SK-N-SH (cell line): ENCODE measurements at regions of chr13 and their contacts with region 1.

Region 1: DNA sequence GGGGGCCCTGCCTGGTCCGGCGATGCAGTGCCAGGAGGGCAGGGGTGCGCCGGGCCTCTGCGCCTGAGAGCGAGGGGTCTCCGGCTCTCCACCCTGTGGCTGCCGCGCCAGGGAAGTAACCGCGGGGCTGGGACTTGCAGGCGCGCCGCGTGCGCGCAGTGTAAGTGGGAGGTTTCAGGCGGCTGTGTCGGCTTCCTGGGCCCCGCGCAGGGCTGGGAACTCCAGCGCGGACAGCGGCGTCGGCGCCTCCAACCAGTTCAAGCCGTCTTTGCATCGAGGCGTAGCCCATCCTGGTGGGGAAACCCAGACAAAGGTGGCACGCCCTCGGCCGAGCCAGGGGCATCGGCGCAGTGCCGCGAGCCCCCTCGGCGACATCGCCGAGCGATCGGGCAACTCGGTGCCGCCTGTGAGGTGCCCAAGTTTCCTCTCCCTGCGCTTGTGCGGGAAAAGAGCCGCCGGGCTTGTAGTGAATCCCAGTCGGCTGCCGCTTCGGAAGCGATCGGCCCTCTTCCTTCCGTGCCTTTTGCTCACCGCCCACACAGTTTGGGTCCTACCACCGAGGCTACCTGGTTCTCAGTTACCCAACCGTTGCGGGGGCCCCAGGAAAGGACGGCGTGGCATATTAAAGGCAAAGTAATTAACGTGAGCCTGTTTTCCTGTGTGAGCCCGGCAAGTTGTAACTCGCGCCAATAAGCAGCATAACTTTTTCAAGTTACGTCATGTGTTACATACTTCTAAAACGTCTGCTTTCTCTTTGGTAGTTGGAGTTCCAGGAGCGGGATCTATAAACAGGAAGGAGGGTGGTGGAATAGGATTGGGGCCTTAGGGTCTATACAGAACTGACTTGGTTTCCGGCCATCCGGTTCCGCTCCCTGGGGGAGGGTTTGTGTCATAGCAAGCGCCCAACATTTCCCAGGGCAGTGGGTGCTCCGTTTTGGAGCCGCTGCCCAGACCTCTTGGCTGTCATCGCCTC is 1.2 kb downstream of the LRCH1 start:
- DNase-seq: peak; percentile 77
- H3K4me3 ChIP-seq: peak overlapping the region; percentile 85 to 97
- H3K27ac ChIP-seq: peak overlapping the region; percentile 88 to 91
- H3K4me1 ChIP-seq: peaks cover 13% of the 10 kb centered on the region in 2 experiments
- H3K27me3 ChIP-seq: no peaks in the 10 kb centered on the region
- CTCF ChIP-seq: peak; percentile 18; the same call in 1 of the 2 replicates
- EP300 ChIP-seq: no peak
- RAD21 ChIP-seq: no peak

Region 2: DNA sequence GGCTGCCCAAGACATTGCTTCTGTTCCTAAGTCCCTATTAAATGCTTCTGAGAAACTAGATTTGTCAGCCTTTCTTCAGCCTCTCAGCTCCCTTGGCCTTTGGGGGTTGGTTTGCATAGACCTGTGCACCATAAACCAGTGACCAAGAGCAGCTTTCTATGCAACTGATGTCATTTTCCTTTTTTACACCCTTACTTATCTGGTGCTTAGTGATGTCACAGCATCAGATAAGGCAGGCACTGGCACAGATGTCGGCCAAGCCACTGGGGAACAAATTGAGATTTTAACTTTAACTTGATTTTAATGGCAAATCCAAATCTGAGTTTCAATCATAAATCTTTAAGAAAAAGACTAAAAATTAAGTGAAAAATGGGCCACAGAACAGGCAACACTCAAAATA is 226.9 kb before region 1 on chr13:
- CTCF ChIA-PET with region 1: no interaction called
- POLR2A ChIA-PET with region 1: no interaction called
- DNase-seq: peak; percentile 29
- H3K4me3 ChIP-seq: no peak overlapping the region
- H3K27ac ChIP-seq: no peak overlapping the region
- H3K4me1 ChIP-seq: peaks cover 0 to 2% of the 10 kb centered on the region in 2 experiments; a peak in 1 of 4 replicates
- H3K27me3 ChIP-seq: no peaks in the 10 kb centered on the region
- CTCF ChIP-seq: no peak
- EP300 ChIP-seq: no peak
- RAD21 ChIP-seq: no peak

Region 3: DNA sequence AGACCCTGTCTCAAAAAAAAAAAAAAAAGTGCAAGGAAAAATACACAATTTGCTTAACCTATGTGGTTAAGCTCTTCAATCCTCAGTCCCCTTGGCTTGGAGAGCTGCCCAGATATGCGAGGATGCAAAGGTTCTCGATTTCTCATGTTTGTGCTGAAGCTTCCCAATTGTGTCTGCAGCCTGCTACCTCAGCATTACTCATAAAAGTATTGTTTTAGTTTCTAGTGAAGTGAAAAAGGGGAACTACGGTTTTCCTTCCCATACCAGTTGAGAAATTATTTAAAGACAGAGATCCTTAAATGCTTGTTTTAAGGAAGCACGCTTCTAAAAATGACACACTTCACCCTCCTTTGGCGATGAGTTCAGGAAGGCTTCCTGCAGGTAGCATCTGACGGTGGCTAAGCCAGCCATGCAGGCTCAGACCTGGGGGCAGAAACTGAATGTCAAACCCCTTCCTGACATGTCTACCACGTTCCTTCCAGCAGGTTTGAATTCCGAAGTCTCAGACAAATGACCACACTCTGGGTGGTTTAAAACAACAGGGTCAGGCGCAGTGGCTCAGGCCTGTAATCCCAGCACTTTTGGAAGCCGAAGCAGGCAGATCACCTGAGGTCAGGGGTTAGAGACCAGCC is 215.0 kb before region 1 on chr13:
- CTCF ChIA-PET with region 1: no interaction called
- POLR2A ChIA-PET with region 1: no interaction called
- DNase-seq: no peak
- H3K4me3 ChIP-seq: no peak overlapping the region
- H3K27ac ChIP-seq: peak overlapping the region in 1 of 2 experiments; percentile 60; a peak in 2 of 4 replicates
- H3K4me1 ChIP-seq: peaks cover 0 to 24% of the 10 kb centered on the region in 2 experiments; a peak in 1 of 4 replicates
- H3K27me3 ChIP-seq: no peaks in the 10 kb centered on the region
- CTCF ChIP-seq: no peak
- EP300 ChIP-seq: 0 out of 4 replicates have a peak, but pooled peaks of 1 of the 2 experiments have one; percentile 36
- RAD21 ChIP-seq: no peak

Region 4: DNA sequence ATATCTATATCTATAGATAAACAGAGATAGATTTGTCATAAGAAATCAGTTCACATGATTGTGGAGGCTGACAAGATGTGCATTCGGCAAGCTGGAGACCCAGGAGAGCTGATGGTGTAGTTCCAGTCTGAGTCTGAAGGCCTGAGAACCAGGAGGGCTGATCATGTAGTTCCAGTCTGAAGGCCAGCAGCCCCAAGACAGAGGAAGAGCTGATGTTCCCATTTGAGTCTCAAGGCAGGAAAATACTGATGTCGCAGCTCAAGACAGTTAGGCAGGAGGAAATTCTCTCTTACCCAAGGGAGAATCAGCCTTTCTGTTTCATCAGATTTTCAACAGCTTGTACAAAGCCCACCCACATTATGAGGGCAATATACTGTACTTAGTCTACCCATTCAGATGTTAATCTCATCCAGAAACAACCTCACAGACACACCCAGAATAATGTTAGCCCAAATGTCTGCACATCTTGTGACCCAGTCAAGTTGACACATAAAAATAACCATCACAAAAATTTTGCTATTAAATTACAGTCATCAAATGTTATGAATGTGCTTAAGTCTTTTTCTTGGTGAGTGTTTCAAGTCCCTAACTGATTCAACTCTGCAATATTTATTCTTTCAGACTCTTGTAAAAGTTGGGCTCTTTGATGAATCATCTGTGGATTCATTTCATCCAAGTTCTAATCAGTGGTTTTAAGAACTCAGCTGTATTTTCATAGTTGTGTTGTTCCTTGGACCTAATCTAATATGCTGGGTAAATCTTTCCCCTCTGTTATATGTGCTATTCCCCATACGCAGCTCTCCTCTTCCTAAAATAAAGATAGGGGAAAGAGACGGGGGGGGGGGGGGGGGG is 23.9 kb before region 1 on chr13:
- CTCF ChIA-PET with region 1: interaction called, 21 read pairs
- POLR2A ChIA-PET with region 1: no interaction called
- DNase-seq: no peak
- H3K4me3 ChIP-seq: no peak overlapping the region
- H3K27ac ChIP-seq: peak overlapping the region in 1 of 2 experiments; percentile 40; a peak in 2 of 4 replicates
- H3K4me1 ChIP-seq: peaks cover 10 to 17% of the 10 kb centered on the region in 2 experiments; a peak in 3 of 4 replicates
- H3K27me3 ChIP-seq: no peaks in the 10 kb centered on the region
- CTCF ChIP-seq: no peak
- EP300 ChIP-seq: no peak
- RAD21 ChIP-seq: no peak

Region 5: GRCh38 chr13:46565808-46566750 is 11.9 kb after region 1 on chr13:
- CTCF ChIA-PET with region 1: interaction called, 13 read pairs
- POLR2A ChIA-PET with region 1: no interaction called
- DNase-seq: no peak
- H3K4me3 ChIP-seq: no peak overlapping the region
- H3K27ac ChIP-seq: no peak overlapping the region
- H3K4me1 ChIP-seq: peaks cover 8 to 10% of the 10 kb centered on the region in 2 experiments; a peak in 3 of 4 replicates
- H3K27me3 ChIP-seq: no peaks in the 10 kb centered on the region
- CTCF ChIP-seq: no peak
- EP300 ChIP-seq: no peak
- RAD21 ChIP-seq: no peak

Region 6: DNA sequence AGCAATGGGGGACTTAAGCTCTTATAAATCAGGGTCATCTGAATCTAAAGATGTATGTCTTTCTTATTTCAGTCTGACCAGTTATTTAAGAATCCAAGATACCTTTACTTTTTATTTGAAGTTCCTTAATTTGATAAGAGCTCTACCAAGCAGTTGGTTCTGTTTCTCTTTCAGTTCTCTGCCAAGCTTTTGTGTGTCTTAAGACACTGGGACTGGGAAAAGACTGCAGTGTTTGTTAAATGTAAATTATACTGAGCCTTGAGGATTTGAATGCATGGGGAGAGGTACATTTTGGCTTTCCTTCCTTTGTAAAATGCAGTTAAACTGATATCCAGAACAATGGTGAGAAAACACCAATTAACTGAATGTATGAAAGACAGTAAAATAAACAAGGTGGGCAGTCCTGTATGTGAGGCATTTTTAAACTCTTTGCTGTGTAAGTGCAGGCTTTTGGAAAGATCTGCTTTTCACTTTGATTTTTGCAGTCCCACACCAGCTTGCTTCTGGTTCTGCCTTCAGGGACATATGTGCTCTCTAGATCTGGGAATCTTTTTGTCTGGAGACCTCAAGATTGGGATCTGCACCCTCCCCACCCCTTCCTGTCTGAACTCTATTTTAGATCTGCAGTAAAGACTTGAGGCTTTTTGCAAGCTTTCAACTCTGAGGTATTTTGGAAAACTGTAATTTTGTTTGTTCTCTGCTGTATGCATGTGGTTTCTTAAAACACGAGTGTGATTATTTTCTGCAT is 76.4 kb after region 1 on chr13:
- CTCF ChIA-PET with region 1: interaction called, 13 read pairs
- POLR2A ChIA-PET with region 1: no interaction called
- DNase-seq: peak; percentile 30
- H3K4me3 ChIP-seq: no peak overlapping the region
- H3K27ac ChIP-seq: peak overlapping the region; percentile 35 to 99; a peak in 3 of 4 replicates
- H3K4me1 ChIP-seq: peaks cover 29 to 36% of the 10 kb centered on the region in 2 experiments; a peak in 3 of 4 replicates
- H3K27me3 ChIP-seq: no peaks in the 10 kb centered on the region
- CTCF ChIP-seq: no peak
- EP300 ChIP-seq: peak in 1 of 2 experiments; percentile 85; a peak in 2 of 4 replicates
- RAD21 ChIP-seq: peak; percentile 18; the same call in 1 of the 2 replicates

Region 7: DNA sequence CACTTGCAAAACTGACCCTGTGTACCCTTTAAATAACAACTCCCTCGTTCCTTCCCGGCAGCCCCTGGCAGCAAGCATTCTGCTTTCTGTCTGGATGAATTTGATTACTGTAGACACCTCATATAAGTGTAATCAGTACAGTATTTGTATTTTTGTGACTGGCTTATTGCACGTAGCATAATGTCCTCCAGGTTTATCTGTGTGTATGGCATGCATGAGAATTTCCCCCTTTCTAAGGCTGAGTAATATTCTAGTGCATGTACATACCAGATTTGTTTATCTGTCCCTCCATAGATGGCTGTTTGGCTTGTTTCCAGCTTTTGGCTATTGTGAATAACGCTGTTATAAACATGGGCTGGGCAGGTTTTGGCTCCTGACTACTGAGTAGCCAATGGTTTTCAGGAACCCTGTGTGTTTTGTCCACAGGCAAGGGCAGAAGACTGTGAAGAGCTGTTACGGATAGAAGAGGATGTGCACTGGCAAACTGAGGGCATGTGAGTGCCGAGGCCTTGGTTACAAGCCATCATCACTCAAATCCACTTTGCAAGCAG is 144.8 kb after region 1 on chr13:
- CTCF ChIA-PET with region 1: interaction called, 16 read pairs
- POLR2A ChIA-PET with region 1: no interaction called
- DNase-seq: peak; percentile 19
- H3K4me3 ChIP-seq: no peak overlapping the region
- H3K27ac ChIP-seq: peak overlapping the region in 1 of 2 experiments; percentile 54; a peak in 2 of 4 replicates
- H3K4me1 ChIP-seq: peaks cover 0 to 18% of the 10 kb centered on the region in 2 experiments; a peak in 2 of 4 replicates
- H3K27me3 ChIP-seq: no peaks in the 10 kb centered on the region
- CTCF ChIP-seq: no peak
- EP300 ChIP-seq: no peak
- RAD21 ChIP-seq: no peak

Region 8: GRCh38 chr13:46721054-46721453 is 166.9 kb after region 1 on chr13:
- CTCF ChIA-PET with region 1: interaction called, 88 read pairs
- POLR2A ChIA-PET with region 1: no interaction called
- DNase-seq: peak; percentile 53
- H3K4me3 ChIP-seq: no peak overlapping the region
- H3K27ac ChIP-seq: peak overlapping the region in 1 of 2 experiments; percentile 19; a peak in 2 of 4 replicates
- H3K4me1 ChIP-seq: peaks cover 4 to 18% of the 10 kb centered on the region in 2 experiments; a peak in 3 of 4 replicates
- H3K27me3 ChIP-seq: no peaks in the 10 kb centered on the region
- CTCF ChIP-seq: peak; percentile 82
- EP300 ChIP-seq: peak in 1 of 2 experiments; percentile 65; a peak in 2 of 4 replicates
- RAD21 ChIP-seq: peak; percentile 90

Region 9: DNA sequence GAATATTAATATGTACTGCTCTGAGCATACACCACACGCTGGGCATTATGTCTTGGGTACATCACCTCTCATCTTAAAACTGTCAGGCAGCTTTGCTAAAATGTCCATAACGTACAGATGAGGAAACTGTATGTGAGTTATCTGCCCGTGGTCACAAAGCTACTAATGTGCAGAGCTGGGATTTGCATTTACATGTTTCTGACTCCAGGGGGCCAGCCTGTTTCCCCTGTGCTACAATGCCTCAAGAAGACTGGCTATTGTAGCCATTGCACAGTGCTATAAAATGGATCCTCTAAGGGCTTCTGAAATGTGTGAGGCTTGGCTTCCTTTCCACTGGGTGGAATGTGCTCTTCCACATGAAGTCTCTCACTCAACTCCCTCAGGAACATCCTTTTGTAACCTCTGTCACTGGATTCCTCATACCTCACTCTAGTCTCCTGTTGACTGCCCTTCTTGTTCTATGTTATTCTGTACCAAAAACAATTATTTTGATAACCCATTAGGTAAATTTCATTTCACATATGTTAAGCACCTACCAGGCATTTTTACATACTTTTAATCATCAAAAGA is 438.3 kb after region 1 on chr13:
- CTCF ChIA-PET with region 1: no interaction called
- POLR2A ChIA-PET with region 1: no interaction called
- DNase-seq: no peak
- H3K4me3 ChIP-seq: no peak overlapping the region
- H3K27ac ChIP-seq: no peak overlapping the region
- H3K4me1 ChIP-seq: no peaks in the 10 kb centered on the region; a peak in 1 of 4 replicates
- H3K27me3 ChIP-seq: no peaks in the 10 kb centered on the region
- CTCF ChIP-seq: peak; percentile 47
- EP300 ChIP-seq: no peak
- RAD21 ChIP-seq: peak; percentile 35; the same call in 1 of the 2 replicates